Heart right ventricle (tissue), 16 donors: ENCODE measurements at regions of chr9 and their contacts with region 1.

Region 1: DNA sequence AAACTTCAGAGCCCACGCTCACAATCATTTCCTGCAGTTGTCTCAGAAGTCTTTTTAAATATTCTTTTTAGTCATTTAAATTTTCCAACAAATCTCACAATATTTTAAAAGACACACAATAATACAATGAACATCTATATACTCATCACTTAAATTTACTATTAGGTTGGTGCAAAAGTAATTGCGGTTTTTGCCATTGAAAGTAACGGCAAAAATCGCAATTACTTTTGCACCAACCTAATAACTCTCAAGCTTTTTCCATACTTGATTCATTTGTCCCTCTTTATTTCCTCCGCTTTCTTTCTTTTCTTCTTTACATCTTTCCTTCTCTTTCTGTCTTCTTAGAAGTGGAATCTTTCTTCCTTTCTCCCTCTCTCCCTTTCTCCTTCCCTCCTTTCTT is 19.2 kb upstream of the TMEM215 start:
- DNase-seq: no peak
- ATAC-seq: no peak
- H3K4me3 ChIP-seq: no peak overlapping the region
- H3K27ac ChIP-seq: no peak overlapping the region
- H3K4me1 ChIP-seq: no peaks in the 10 kb centered on the region
- H3K27me3 ChIP-seq: no peaks in the 10 kb centered on the region
- CTCF ChIP-seq: no peak

Region 2: DNA sequence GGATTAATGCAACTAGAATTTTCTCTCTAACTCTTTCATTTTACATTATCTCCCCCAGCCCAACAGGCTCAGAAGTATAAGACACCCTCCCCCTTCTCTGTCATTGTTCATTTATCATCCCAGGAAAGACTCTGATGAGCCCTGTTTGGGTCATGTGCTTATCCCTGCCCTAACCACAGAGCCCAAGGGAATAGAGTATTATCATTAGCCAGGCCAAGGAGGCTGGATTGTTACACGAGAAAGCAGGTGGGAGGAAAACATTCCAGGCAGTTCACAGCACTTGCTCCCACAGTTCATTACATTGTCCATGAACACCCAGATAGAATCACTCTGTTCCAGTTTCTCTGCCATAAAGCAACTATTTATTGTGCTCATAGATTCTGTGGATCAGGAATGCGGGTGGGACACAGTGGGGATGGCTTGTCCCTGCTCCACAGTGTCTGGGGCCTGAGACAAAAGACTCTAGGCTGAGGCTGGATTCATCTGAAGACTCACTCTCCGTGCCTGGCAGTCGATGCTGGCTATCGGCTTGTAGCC is 40.3 kb before region 1 on chr9:
- intact Hi-C with region 1: loop called in 1 of 10 experiments (anchors 5 kb)
- DNase-seq: no peak
- ATAC-seq: no peak
- H3K4me3 ChIP-seq: no peak overlapping the region
- H3K27ac ChIP-seq: no peak overlapping the region
- H3K4me1 ChIP-seq: no peaks in the 10 kb centered on the region
- H3K27me3 ChIP-seq: peaks cover 0 to 15% (median 0%) of the 10 kb centered on the region in 7 donors
- CTCF ChIP-seq: no peak

Region 3: GRCh38 chr9:32811246-32811645 is 47.1 kb after region 1 on chr9:
- intact Hi-C with region 1: no loop called
- DNase-seq: no peak
- ATAC-seq: no peak
- H3K4me3 ChIP-seq: no peak overlapping the region
- H3K27ac ChIP-seq: no peak overlapping the region
- H3K4me1 ChIP-seq: no peaks in the 10 kb centered on the region
- H3K27me3 ChIP-seq: peaks cover 0 to 10% (median 0%) of the 10 kb centered on the region in 7 donors
- CTCF ChIP-seq: no peak

Region 4: DNA sequence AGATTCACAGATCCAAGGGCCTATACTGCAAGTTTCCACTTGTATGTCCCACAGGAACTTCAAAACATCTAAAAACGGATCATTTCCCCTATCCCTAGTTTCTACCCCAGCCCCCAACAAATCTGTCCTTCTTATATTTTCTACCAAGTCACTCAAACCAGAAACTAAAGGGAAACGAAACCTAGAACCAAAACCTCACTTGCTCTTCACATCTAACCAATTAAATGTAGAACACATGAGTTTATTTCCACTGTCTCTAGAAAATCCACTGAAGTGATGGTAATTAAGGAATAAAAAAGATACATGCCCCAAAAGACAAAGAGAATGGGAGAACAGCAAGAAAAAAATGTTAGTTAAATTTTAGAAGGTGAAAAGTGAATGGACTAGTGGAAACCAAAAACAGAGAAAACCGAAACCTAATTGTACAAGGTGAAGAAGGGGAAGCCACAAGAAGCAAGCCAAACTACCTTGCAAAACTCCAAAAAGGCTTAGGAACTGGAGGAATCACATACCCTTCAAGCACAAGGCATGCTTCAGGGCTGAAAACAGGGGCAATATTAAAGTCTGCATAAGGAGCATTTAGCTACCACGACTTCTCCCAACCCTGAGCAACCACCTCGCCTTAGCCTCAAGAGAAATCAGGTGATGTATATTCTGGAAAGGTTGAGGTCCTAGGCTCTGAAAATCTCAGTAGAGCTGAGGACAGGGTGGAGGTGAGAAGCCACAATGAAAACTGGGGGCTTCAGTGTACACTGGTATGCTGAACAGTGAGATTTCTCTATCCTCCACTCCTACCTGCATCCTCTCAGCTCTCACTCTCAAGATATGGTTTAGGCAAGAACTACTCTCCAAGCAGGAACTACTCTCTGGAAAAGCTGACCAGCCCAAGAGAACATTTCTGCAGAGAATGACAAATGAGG is 301.3 kb after region 1 on chr9:
- intact Hi-C with region 1: no loop called
- DNase-seq: no peak
- ATAC-seq: peak in 1 of 8 donors; percentile 30
- H3K4me3 ChIP-seq: no peak overlapping the region
- H3K27ac ChIP-seq: peak overlapping the region in 1 of 10 donors; percentile 32
- H3K4me1 ChIP-seq: peaks cover 0 to 14% (median 0%) of the 10 kb centered on the region in 9 donors
- H3K27me3 ChIP-seq: no peaks in the 10 kb centered on the region
- CTCF ChIP-seq: no peak